GM12878 (cell line): ENCODE measurements at regions of chr9 and their contacts with region 1.

Region 1: DNA sequence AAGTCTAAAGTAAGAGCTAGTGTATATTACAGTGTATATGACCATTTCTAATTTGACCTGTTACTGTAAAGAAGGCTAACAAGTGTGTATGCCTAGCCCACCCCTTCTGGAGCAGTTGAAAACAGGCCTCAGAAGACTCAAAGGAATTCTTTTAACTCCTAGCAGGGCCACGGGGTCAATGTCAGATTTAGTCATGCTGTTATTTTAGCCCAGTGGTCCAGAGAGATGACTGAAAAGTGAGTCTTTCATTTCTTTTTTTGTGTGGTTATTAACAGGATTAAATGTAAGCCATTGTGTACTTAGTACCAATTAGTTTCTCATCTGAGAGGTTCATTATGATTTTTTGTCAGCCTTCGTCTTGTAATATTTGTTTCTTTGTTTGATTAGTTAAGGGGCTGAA is 24.4 kb downstream of the ZCCHC7 start:
- DNase-seq: peak; percentile 82
- ATAC-seq: peak; percentile 75
- H3K4me3 ChIP-seq: peak overlapping the region; percentile 9; the same call in 1 of the 2 replicates
- H3K27ac ChIP-seq: peak overlapping the region; percentile 82
- H3K4me1 ChIP-seq: peaks cover 18% of the 10 kb centered on the region; the same call in 1 of the 2 replicates
- H3K27me3 ChIP-seq: no peaks in the 10 kb centered on the region
- CTCF ChIP-seq: no peak
- EP300 ChIP-seq: peak; percentile 96 to 98
- POLR2A ChIP-seq: no peak
- RAD21 ChIP-seq: 0 out of 2 replicates have a peak, but pooled peaks have one; percentile 25

Region 2: DNA sequence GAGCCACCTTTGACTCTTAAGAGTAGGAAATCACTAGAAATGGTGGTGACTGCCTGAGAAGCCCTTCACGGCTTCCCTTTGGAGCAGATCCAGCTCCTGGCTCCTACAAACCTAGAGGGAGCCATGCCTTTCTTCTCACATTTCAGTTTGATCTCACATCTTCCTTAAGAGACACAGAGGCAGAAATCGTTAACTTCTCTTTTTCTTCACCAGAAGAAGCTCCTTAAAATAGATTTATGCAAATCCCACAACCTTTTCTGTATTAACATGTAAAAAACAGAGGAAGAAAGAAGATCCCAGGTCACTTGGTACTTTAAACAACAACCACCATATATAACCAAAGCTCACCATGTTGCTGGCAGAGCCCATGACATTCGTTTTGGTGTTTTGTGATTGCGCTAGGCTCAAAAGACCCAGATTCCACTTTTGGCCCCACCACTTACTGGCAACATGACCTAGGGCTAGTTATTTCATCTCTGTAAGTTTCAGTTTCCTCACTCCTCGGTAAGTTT is 140.3 kb before region 1 on chr9:
- CTCF ChIA-PET with region 1: interaction called, 4 read pairs
- POLR2A ChIA-PET with region 1: no interaction called
- RAD21 ChIA-PET with region 1: no interaction called
- SMC1A ChIA-PET with region 1: interaction called, 10 read pairs
- in situ Hi-C with region 1: no loop called
- intact Hi-C with region 1: no loop called
- DNase-seq: no peak
- ATAC-seq: peak; percentile 47
- H3K4me3 ChIP-seq: peak overlapping the region; percentile 27; the same call in 1 of the 2 replicates
- H3K27ac ChIP-seq: peak overlapping the region; percentile 98
- H3K4me1 ChIP-seq: peaks cover 92% of the 10 kb centered on the region
- H3K27me3 ChIP-seq: no peaks in the 10 kb centered on the region
- CTCF ChIP-seq: no peak
- EP300 ChIP-seq: no peak
- POLR2A ChIP-seq: peak; percentile 38
- RAD21 ChIP-seq: no peak

Region 3: GRCh38 chr9:37119907-37120842 is 24.6 kb before region 1 on chr9 and contains the start of gene ZCCHC7:
- CTCF ChIA-PET with region 1: interaction called, 4 read pairs
- POLR2A ChIA-PET with region 1: interaction called, 50 read pairs
- RAD21 ChIA-PET with region 1: interaction called, 76 read pairs
- SMC1A ChIA-PET with region 1: interaction called, 99 read pairs
- in situ Hi-C with region 1: no loop called
- intact Hi-C with region 1: loop called (anchors 2 kb)
- DNase-seq: peak; percentile 89
- ATAC-seq: peak; percentile 94
- H3K4me3 ChIP-seq: peak within 1 kb of the TSS; percentile 93
- H3K27ac ChIP-seq: peak within 1 kb of the TSS; percentile 93
- H3K4me1 ChIP-seq: peaks cover 8% of the 10 kb centered on the region
- H3K27me3 ChIP-seq: no peaks in the 10 kb centered on the region
- CTCF ChIP-seq: no peak
- EP300 ChIP-seq: no peak
- POLR2A ChIP-seq: peak; percentile 92
- RAD21 ChIP-seq: no peak
- polyA plus RNA-seq, gene ZCCHC7: 58.6 to 60.8 TPM

Region 4: DNA sequence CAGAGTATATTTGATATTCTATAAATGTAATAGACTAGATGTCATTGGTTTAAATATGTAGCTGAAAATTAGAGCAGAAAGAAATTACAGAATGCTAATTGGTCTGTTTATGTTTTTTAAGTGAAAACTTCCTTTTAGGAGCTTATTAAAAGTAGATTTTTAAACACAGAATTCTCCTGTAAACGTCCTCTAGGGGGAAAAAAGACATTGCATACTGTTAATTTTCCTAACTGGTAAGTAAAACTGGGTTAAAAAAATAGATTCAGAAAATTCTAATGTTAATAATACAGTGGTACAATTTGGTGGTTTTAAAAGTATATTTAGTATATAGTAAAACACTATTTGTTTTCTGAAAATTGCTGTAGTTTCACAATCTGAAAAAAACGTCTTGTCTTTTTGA is 35.4 kb after region 1 on chr9:
- CTCF ChIA-PET with region 1: interaction called, 4 read pairs
- POLR2A ChIA-PET with region 1: interaction called, 3 read pairs
- RAD21 ChIA-PET with region 1: interaction called, 10 read pairs
- SMC1A ChIA-PET with region 1: interaction called, 11 read pairs
- in situ Hi-C with region 1: no loop called
- intact Hi-C with region 1: no loop called
- DNase-seq: no peak
- ATAC-seq: no peak
- H3K4me3 ChIP-seq: no peak overlapping the region
- H3K27ac ChIP-seq: no peak overlapping the region
- H3K4me1 ChIP-seq: no peaks in the 10 kb centered on the region; the same call in 1 of the 2 replicates
- H3K27me3 ChIP-seq: no peaks in the 10 kb centered on the region
- CTCF ChIP-seq: no peak
- EP300 ChIP-seq: no peak
- POLR2A ChIP-seq: no peak
- RAD21 ChIP-seq: no peak

Region 5: DNA sequence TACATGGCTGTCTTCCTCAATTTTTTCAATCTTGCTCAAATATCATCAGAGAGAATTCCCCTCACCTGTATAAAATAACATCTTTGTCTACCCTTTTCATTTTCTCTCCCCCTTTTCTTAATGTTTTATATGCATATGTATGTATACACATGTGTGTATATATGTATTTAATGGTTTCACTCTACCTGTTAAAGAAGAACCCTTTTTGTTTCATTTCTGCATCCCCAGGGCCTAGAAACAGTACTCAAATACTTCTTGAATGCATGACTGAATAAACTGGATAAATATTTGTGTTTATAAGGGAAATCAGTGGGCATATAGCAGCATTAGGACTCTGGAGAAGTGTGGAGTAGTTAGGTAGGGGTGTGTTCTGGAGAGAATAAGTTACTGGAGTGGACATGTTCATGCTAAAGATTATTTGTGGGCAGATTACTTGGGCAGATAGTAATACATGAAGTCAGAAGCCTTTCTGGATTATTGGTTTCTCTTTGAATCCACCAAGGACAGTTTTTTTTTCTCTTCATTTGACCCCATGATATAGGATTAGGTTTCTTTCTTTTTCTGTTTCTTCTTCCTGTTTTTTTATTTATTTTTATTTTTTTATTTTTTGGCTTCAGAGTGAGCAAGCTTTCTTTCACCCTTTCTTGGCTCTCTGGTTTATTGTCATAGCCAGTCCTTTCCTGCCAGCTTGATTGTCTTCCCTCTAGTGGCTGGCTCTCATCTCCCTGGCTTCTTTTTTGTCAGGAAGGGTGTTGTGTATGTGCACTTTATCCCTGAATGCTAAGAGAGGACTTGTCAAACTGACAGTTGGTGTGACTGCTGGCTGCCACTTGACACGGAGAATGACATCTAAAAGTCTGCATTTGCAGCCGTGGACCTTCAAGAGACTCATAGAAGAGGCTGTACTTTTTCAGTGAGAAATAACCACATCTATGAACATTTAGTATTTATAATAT is 64.9 kb after region 1 on chr9:
- CTCF ChIA-PET with region 1: no interaction called
- POLR2A ChIA-PET with region 1: no interaction called
- RAD21 ChIA-PET with region 1: interaction called, 10 read pairs
- SMC1A ChIA-PET with region 1: interaction called, 6 read pairs
- in situ Hi-C with region 1: no loop called
- intact Hi-C with region 1: no loop called
- DNase-seq: no peak
- ATAC-seq: peak; percentile 51
- H3K4me3 ChIP-seq: no peak overlapping the region
- H3K27ac ChIP-seq: peak overlapping the region; percentile 73
- H3K4me1 ChIP-seq: peaks cover 31% of the 10 kb centered on the region
- H3K27me3 ChIP-seq: no peaks in the 10 kb centered on the region
- CTCF ChIP-seq: peak in 2 of 3 experiments; percentile 16 to 21; a peak in 3 of 6 replicates
- EP300 ChIP-seq: no peak
- POLR2A ChIP-seq: no peak
- RAD21 ChIP-seq: peak; percentile 22; the same call in 1 of the 2 replicates

Region 6: DNA sequence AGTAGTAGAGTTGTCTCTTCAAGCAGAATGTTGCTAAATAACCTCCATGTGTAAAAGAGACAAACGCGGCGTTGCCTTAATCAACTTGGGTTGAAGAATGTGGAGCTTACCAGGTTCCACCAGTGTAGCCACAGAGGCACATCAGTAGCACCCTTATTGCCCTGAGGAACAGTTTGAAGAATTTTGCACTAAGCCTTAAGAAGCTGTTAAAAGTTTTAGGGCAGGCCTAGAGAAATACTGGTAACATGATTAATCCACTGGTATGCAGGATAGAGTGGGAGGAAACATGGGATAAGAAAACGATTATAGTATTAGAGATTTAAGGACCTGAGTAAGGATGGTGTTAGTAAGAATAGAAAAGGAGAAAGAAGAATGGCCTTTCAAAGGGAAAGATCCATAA is 76.2 kb after region 1 on chr9:
- CTCF ChIA-PET with region 1: no interaction called
- POLR2A ChIA-PET with region 1: no interaction called
- RAD21 ChIA-PET with region 1: no interaction called
- SMC1A ChIA-PET with region 1: no interaction called
- in situ Hi-C with region 1: no loop called
- intact Hi-C with region 1: no loop called
- DNase-seq: no peak
- ATAC-seq: peak; percentile 47
- H3K4me3 ChIP-seq: no peak overlapping the region
- H3K27ac ChIP-seq: no peak overlapping the region
- H3K4me1 ChIP-seq: no peaks in the 10 kb centered on the region
- H3K27me3 ChIP-seq: no peaks in the 10 kb centered on the region
- CTCF ChIP-seq: no peak
- EP300 ChIP-seq: no peak
- POLR2A ChIP-seq: no peak
- RAD21 ChIP-seq: no peak

Region 7: GRCh38 chr9:37302277-37302676 is 157.5 kb after region 1 on chr9:
- CTCF ChIA-PET with region 1: interaction called, 5 read pairs
- POLR2A ChIA-PET with region 1: interaction called, 5 read pairs
- RAD21 ChIA-PET with region 1: interaction called, 14 read pairs
- SMC1A ChIA-PET with region 1: interaction called, 9 read pairs
- in situ Hi-C with region 1: no loop called
- intact Hi-C with region 1: no loop called
- DNase-seq: peak; percentile 90
- ATAC-seq: peak; percentile 91
- H3K4me3 ChIP-seq: peak overlapping the region; percentile 43; the same call in 1 of the 2 replicates
- H3K27ac ChIP-seq: peak overlapping the region; percentile 95
- H3K4me1 ChIP-seq: peaks cover 48% of the 10 kb centered on the region
- H3K27me3 ChIP-seq: no peaks in the 10 kb centered on the region
- CTCF ChIP-seq: no peak
- EP300 ChIP-seq: peak; percentile 82 to 93
- POLR2A ChIP-seq: no peak
- RAD21 ChIP-seq: peak; percentile 31; the same call in 1 of the 2 replicates

Region 8: GRCh38 chr9:37465249-37466036 is 320.7 kb after region 1 on chr9 and contains the start of gene ZBTB5:
- CTCF ChIA-PET with region 1: no interaction called
- POLR2A ChIA-PET with region 1: no interaction called
- RAD21 ChIA-PET with region 1: no interaction called
- SMC1A ChIA-PET with region 1: no interaction called
- in situ Hi-C with region 1: no loop called
- intact Hi-C with region 1: no loop called
- DNase-seq: peak; percentile 100
- ATAC-seq: peak; percentile 85
- H3K4me3 ChIP-seq: peak within 1 kb of the TSS; percentile 84
- H3K27ac ChIP-seq: peak within 1 kb of the TSS; percentile 92
- H3K4me1 ChIP-seq: no peaks in the 10 kb centered on the region
- H3K27me3 ChIP-seq: no peaks in the 10 kb centered on the region
- CTCF ChIP-seq: no peak
- EP300 ChIP-seq: no peak
- POLR2A ChIP-seq: no peak
- RAD21 ChIP-seq: no peak
- polyA plus RNA-seq, gene ZBTB5: 1.4 to 2.5 TPM